ENCODE measurements at regions of chr13 and their contacts with region 1.

Region 1: DNA sequence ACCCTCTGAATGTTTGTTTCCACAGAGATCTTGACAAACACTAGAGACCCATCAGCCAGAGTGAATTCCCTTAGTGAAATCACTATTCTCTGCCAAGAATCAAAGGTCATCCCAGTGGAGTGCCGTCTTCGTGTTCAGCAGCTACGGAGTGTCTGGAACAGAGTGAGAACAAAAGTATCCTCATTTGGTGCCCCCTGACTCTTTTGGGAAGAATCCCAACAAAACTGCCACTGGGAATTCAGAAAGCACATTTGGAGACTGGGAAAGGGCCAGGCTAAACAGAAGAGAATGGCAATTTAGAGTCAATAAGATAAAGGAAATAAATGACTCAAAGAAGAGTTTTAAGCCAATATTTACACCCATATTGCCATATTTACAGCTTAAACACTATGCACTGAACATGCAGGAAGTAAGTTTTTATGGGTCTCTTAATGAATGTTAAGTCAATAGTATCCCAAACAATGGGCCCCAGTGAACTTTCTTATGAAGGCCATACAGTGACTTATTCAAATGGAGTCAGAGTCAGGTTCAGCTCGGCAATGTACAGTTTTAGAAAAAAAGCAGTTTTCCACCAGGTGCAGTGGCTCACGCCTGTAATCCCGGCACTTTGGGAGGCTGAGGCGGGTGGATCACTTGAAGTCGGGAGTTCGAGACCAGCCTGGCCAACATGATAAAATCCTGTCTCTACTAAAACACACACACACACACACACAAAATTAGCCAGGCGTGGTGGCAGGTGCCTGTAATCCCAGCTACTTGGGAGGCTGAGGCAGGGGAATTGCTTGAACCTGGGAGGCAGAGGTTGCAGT is 392.6 kb downstream of the KLF5 start:
- DNase-seq: no peak
- ATAC-seq: no peak
- H3K4me3 ChIP-seq: no peak overlapping the region
- H3K27ac ChIP-seq: no peak overlapping the region
- H3K4me1 ChIP-seq: no peaks in the 10 kb centered on the region
- H3K27me3 ChIP-seq: no peaks in the 10 kb centered on the region
- CTCF ChIP-seq: no peak

Region 2: GRCh38 chr13:73421310-73421912 is 30.0 kb before region 1 on chr13:
- CTCF ChIA-PET with region 1: no interaction called
- POLR2A ChIA-PET with region 1: no interaction called
- in situ Hi-C with region 1: no loop called
- intact Hi-C with region 1: no loop called
- DNase-seq: no peak
- ATAC-seq: no peak
- H3K4me3 ChIP-seq: no peak overlapping the region
- H3K27ac ChIP-seq: no peak overlapping the region
- H3K4me1 ChIP-seq: no peaks in the 10 kb centered on the region
- H3K27me3 ChIP-seq: no peaks in the 10 kb centered on the region
- CTCF ChIP-seq: no peak

Region 3: DNA sequence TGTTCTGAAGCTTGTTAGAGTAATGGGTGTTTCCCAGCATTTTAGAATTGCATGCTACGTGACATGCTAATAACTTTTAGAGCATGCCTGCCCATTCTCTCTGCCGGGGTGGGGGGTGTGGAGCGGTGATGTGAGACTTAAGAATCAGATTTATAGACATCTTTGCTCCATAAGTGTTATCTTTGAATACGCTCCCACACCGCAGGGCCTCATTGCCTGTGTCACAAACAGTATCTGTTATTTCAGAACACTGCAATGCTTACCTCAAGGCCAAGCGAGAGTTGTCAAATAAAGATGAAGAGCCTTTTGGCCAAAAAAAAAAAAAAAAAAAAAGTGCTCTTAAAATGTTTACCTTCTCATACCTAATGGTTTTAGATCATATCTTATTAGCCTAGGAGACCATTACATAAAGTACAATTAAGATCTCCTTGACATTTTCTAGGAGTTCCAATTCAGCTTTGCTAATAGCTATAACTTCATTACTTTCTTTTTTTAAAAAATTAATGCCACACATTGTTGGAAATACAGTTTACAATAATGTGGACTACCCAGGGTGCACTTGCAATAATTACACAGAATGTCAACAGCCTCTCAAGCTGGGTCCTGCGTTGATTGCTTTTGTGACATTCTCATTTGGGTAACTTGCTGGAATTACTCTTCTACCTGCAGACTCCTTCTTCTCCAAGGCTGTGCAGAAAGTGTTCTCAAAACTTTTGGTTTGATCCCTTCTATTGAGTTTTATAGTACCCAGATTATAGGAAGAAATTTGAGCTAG is 157.5 kb after region 1 on chr13:
- CTCF ChIA-PET with region 1: no interaction called
- POLR2A ChIA-PET with region 1: interaction called, 19 read pairs
- in situ Hi-C with region 1: no loop called
- intact Hi-C with region 1: no loop called
- DNase-seq: no peak
- ATAC-seq: no peak
- H3K4me3 ChIP-seq: no peak overlapping the region
- H3K27ac ChIP-seq: no peak overlapping the region
- H3K4me1 ChIP-seq: no peaks in the 10 kb centered on the region
- H3K27me3 ChIP-seq: no peaks in the 10 kb centered on the region
- CTCF ChIP-seq: no peak